ENCODE measurements at regions of chr19 and their contacts with region 1.

Region 1: GRCh38 chr19:28466107-28467045 is 746.6 kb downstream of the UQCRFS1 start:
- DNase-seq: peak; percentile 61 to 72
- H3K4me3 ChIP-seq: no peak overlapping the region
- H3K4me3 Mint-ChIP-seq: no peak overlapping the region
- H3K27ac Mint-ChIP-seq: no peak overlapping the region
- H3K4me1 ChIP-seq: no peaks in the 10 kb centered on the region
- H3K4me1 Mint-ChIP-seq: no peaks in the 10 kb centered on the region
- H3K27me3 ChIP-seq: no peaks in the 10 kb centered on the region
- H3K27me3 Mint-ChIP-seq: peaks cover 2% of the 10 kb centered on the region
- CTCF ChIP-seq: peak; percentile 66 to 69

Region 2: GRCh38 chr19:28633319-28634018 is 167.1 kb after region 1 on chr19:
- CTCF ChIA-PET with region 1: no interaction called
- POLR2A ChIA-PET with region 1: no interaction called
- intact Hi-C with region 1: loop called (anchors 1 kb)
- DNase-seq: peak in 1 of 2 experiments; percentile 57
- H3K4me3 ChIP-seq: no peak overlapping the region
- H3K4me3 Mint-ChIP-seq: no peak overlapping the region
- H3K27ac Mint-ChIP-seq: no peak overlapping the region
- H3K4me1 ChIP-seq: no peaks in the 10 kb centered on the region
- H3K4me1 Mint-ChIP-seq: no peaks in the 10 kb centered on the region
- H3K27me3 ChIP-seq: no peaks in the 10 kb centered on the region
- H3K27me3 Mint-ChIP-seq: peaks cover 2% of the 10 kb centered on the region
- CTCF ChIP-seq: peak; percentile 56 to 80

Region 3: DNA sequence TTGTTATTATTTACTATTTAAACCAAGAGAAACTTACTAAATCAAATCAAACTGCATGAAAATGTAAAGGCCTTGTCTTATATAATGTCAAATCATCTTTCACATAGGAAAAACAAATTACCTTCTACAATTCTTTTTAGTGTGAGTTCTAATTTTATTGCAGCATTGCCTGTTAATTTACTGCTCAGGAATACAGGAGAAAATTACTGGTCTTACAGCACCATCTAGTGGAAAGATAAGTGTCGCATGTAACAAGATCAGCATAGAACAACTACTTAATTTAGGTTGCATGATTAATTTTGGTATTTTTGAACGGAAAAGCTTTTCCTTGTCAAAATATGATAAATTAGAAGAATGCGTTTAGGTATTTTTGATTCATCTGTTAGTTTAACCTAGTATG is 243.9 kb after region 1 on chr19:
- CTCF ChIA-PET with region 1: no interaction called
- POLR2A ChIA-PET with region 1: no interaction called
- intact Hi-C with region 1: loop called (anchors 1 kb)
- DNase-seq: peak in 1 of 2 experiments; percentile 54
- H3K4me3 ChIP-seq: no peak overlapping the region
- H3K4me3 Mint-ChIP-seq: no peak overlapping the region
- H3K27ac Mint-ChIP-seq: no peak overlapping the region
- H3K4me1 ChIP-seq: no peaks in the 10 kb centered on the region
- H3K4me1 Mint-ChIP-seq: no peaks in the 10 kb centered on the region
- H3K27me3 ChIP-seq: no peaks in the 10 kb centered on the region
- H3K27me3 Mint-ChIP-seq: no peaks in the 10 kb centered on the region
- CTCF ChIP-seq: peak; percentile 50 to 62

Measured in Caco-2 (cell line).